Calu3 (cell line): ENCODE measurements at regions of chr11 and their contacts with region 1.

Region 1: GRCh38 chr11:55942785-55943392 is 6.7 kb upstream of the OR5I1 start:
- DNase-seq: peak; percentile 14
- H3K4me3 Mint-ChIP-seq: no peak overlapping the region
- H3K27ac Mint-ChIP-seq: no peak overlapping the region
- H3K4me1 Mint-ChIP-seq: no peaks in the 10 kb centered on the region
- H3K27me3 Mint-ChIP-seq: no peaks in the 10 kb centered on the region
- CTCF ChIP-seq: peak; percentile 12

Region 2: GRCh38 chr11:56089697-56090096 is 146.8 kb after region 1 on chr11:
- CTCF ChIA-PET with region 1: no interaction called
- intact Hi-C with region 1: loop called (anchors 2 kb)
- DNase-seq: no peak
- H3K4me3 Mint-ChIP-seq: no peak overlapping the region
- H3K27ac Mint-ChIP-seq: no peak overlapping the region
- H3K4me1 Mint-ChIP-seq: no peaks in the 10 kb centered on the region
- H3K27me3 Mint-ChIP-seq: no peaks in the 10 kb centered on the region
- CTCF ChIP-seq: no peak

Region 3: DNA sequence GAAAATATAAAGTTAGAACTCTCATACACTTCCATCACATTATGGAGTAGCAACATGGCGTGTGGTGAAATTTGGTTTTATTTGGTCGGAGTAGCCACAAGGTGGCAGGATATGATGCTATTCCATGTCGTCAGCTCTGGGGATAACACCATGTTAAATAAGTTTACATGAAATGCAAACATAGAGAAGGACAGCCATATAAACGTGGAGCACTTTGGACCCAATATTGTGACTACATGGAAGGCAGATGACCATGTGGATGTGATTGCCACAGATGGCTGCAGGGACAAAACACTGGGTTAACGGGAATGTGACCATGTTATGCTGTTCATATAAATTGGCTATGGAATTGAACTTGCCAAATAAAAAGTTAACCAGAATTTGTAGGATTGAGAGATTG is 579.1 kb after region 1 on chr11:
- CTCF ChIA-PET with region 1: no interaction called
- intact Hi-C with region 1: loop called (anchors 5 kb)
- DNase-seq: peak; percentile 10
- H3K4me3 Mint-ChIP-seq: no peak overlapping the region
- H3K27ac Mint-ChIP-seq: no peak overlapping the region
- H3K4me1 Mint-ChIP-seq: no peaks in the 10 kb centered on the region
- H3K27me3 Mint-ChIP-seq: no peaks in the 10 kb centered on the region
- CTCF ChIP-seq: no peak

Region 4: GRCh38 chr11:56624661-56625110 is 681.8 kb after region 1 on chr11:
- CTCF ChIA-PET with region 1: no interaction called
- intact Hi-C with region 1: loop called (anchors 10 kb)
- DNase-seq: peak; percentile 51
- H3K4me3 Mint-ChIP-seq: no peak overlapping the region
- H3K27ac Mint-ChIP-seq: no peak overlapping the region
- H3K4me1 Mint-ChIP-seq: no peaks in the 10 kb centered on the region
- H3K27me3 Mint-ChIP-seq: peaks cover 13% of the 10 kb centered on the region
- CTCF ChIP-seq: peak; percentile 45

Region 5: GRCh38 chr11:56783448-56784041 is 840.7 kb after region 1 on chr11:
- CTCF ChIA-PET with region 1: no interaction called
- intact Hi-C with region 1: loop called (anchors 1 kb)
- DNase-seq: peak; percentile 17
- H3K4me3 Mint-ChIP-seq: no peak overlapping the region
- H3K27ac Mint-ChIP-seq: no peak overlapping the region
- H3K4me1 Mint-ChIP-seq: no peaks in the 10 kb centered on the region
- H3K27me3 Mint-ChIP-seq: no peaks in the 10 kb centered on the region
- CTCF ChIP-seq: peak; percentile 41